ENCODE measurements at regions of chr1 and their contacts with region 1.

Region 1: GRCh38 chr1:111603979-111604378 is 15.6 kb upstream of the RAP1A start:
- DNase-seq: peak; percentile 93
- ATAC-seq: peak; percentile 85
- H3K4me3 Mint-ChIP-seq: peak overlapping the region; percentile 36
- H3K27ac Mint-ChIP-seq: peak overlapping the region; percentile 90
- H3K4me1 Mint-ChIP-seq: peaks cover 73% of the 10 kb centered on the region
- H3K27me3 Mint-ChIP-seq: no peaks in the 10 kb centered on the region
- CTCF ChIP-seq: no peak

Region 2: GRCh38 chr1:111516005-111516535 is 87.9 kb before region 1 on chr1:
- CTCF ChIA-PET with region 1: interaction called, 18 read pairs
- POLR2A ChIA-PET with region 1: interaction called, 11 read pairs
- intact Hi-C with region 1: no loop called
- DNase-seq: peak; percentile 82
- ATAC-seq: peak; percentile 62
- H3K4me3 Mint-ChIP-seq: peak overlapping the region; percentile 62
- H3K27ac Mint-ChIP-seq: peak overlapping the region; percentile 94
- H3K4me1 Mint-ChIP-seq: peaks cover 58% of the 10 kb centered on the region
- H3K27me3 Mint-ChIP-seq: no peaks in the 10 kb centered on the region
- CTCF ChIP-seq: peak; percentile 71

Region 3: DNA sequence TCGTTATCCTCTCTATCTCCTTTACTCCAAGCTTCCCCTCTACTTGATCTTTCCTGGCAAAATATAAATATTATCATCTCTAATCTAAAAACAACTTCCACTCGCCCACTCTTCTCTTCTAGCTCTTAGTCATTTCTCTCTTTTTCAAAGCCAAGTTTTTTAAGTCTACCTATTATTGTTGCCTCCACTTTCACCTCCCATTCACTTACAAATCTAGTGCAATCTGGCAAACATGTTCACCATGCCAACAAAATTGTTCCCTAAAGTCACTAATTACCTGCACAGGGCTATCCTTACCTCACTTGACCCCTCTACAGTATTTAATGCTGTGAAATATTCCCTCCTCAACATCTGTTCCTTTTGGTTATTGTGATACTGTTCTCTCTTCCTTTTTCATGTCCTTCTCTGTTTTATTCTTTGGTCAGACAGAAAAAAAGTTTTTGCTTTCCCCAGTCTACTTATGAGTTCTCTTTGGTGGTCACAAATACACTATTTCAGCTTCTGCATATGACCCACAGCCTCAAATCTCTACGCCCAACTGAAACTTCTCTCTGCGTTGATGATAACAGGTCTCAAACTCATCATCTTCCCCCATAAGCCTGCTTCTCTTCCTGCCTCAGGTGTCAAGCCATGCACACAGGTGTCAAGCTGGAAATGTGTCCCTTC is 16.3 kb before region 1 on chr1:
- CTCF ChIA-PET with region 1: interaction called, 24 read pairs
- POLR2A ChIA-PET with region 1: interaction called, 93 read pairs
- intact Hi-C with region 1: no loop called
- DNase-seq: no peak
- ATAC-seq: peak; percentile 38
- H3K4me3 Mint-ChIP-seq: no peak overlapping the region
- H3K27ac Mint-ChIP-seq: no peak overlapping the region
- H3K4me1 Mint-ChIP-seq: peaks cover 29% of the 10 kb centered on the region
- H3K27me3 Mint-ChIP-seq: no peaks in the 10 kb centered on the region
- CTCF ChIP-seq: no peak

Region 4: DNA sequence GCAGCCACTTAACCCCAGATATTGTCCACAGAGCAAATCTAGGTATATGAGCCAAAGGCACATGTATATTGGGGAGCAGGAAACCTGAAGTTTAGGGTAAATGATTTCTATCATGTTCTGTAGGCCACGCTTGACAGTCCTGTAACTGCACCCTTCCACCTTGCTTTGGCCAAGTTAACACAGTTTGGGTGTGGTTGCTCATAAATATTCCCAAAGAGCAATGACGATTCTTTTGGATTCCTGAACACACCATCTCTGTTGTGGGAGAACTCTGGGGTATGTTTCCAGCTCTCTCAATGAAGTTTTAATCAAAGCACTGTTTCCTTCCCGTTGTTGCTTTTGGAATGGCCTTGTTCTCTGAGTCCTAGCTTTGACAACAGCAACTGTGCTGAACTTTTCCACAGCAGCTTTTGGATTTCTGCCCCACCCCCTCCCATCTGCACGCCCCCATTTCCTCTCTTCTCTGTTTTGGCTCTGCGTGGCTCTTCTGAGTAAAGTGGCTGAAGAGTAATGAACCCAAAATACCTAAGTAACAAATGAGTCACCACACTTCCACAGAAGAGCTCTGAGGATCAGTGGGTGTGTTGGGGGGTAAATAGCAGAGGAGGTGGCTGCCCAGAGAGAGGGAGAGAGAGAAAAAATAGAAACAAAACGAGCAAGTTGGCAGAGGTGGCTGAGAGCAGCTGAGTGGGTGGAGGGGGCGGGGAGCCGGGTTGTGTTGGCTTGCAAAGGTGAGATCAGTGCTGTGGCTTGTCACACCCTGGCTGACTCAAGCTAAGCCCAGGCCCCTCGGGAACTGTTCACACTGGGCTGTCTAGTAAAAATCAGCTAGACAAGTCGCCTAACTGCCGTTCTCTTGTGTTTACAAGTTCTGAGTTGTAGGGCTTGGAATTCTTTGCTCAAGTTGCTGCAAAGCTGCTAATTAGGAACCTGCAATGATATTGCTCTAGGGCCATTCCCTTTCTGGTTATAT is 11.3 kb before region 1 on chr1:
- CTCF ChIA-PET with region 1: interaction called, 24 read pairs
- POLR2A ChIA-PET with region 1: interaction called, 93 read pairs
- intact Hi-C with region 1: no loop called
- DNase-seq: peak; percentile 100
- ATAC-seq: peak; percentile 90
- H3K4me3 Mint-ChIP-seq: peak overlapping the region; percentile 57
- H3K27ac Mint-ChIP-seq: peak overlapping the region; percentile 91
- H3K4me1 Mint-ChIP-seq: peaks cover 76% of the 10 kb centered on the region
- H3K27me3 Mint-ChIP-seq: no peaks in the 10 kb centered on the region
- CTCF ChIP-seq: no peak

Region 5: GRCh38 chr1:111619635-111620440 is 15.9 kb after region 1 on chr1 and contains the start of gene RAP1A:
- CTCF ChIA-PET with region 1: interaction called, 77 read pairs
- POLR2A ChIA-PET with region 1: interaction called, 176 read pairs
- intact Hi-C with region 1: loop called (anchors 2 kb)
- DNase-seq: peak; percentile 97
- ATAC-seq: peak; percentile 79
- H3K4me3 Mint-ChIP-seq: peak within 1 kb of the TSS; percentile 99
- H3K27ac Mint-ChIP-seq: peak within 1 kb of the TSS; percentile 96
- H3K4me1 Mint-ChIP-seq: peaks cover 63% of the 10 kb centered on the region
- H3K27me3 Mint-ChIP-seq: no peaks in the 10 kb centered on the region
- CTCF ChIP-seq: no peak
- total RNA-seq, gene RAP1A: 197 to 198 TPM

Measured in activated CD8-positive, alpha-beta T cell treated with anti-CD3 and anti-CD28 coated beads for 36 hours (primary cell).